ENCODE measurements at regions of chr19 and their contacts with region 1.

Region 1: DNA sequence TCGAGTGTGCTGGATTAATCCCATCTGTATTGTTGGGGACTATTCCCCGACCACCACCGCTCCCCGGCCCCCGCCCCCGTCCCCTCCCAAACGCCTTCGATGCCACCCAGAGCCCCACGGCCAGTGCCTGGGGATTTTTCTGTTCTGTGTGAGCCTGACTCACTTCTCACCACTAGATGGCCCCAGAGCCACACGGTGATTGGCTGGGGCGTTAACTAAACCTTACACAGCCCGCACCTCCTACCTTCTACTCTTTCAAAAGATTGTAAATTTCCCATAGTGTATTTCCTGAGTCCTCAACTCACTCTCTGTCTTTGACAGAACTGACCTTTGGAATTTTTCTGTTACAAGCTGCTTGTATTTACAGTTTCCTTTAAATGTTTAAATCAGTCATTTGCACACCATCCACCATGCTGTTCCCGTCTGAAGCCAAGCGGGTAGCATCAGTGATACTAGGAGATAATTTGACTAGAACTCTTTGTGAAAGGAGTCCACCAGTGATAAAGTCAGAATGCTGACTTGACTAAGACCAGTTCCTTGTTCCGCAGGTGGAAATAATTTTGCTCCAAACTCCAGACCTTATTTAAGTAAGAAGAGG is 61.4 kb downstream of the RFX2 start:
- H3K4me3 ChIP-seq: no peak overlapping the region
- H3K27ac ChIP-seq: no peak overlapping the region
- H3K4me1 ChIP-seq: no peaks in the 10 kb centered on the region
- CTCF ChIP-seq: peak; percentile 52; the same call in 1 of the 2 replicates

Region 2: GRCh38 chr19:5987077-5987818 is 61.7 kb before region 1 on chr19:
- CTCF ChIA-PET with region 1: interaction called, 12 read pairs
- POLR2A ChIA-PET with region 1: interaction called, 3 read pairs
- H3K4me3 ChIP-seq: peak overlapping the region; percentile 23
- H3K27ac ChIP-seq: no peak overlapping the region
- H3K4me1 ChIP-seq: no peaks in the 10 kb centered on the region
- CTCF ChIP-seq: peak; percentile 77

Region 3: GRCh38 chr19:6038634-6039405 is 10.1 kb before region 1 on chr19:
- CTCF ChIA-PET with region 1: interaction called, 14 read pairs
- POLR2A ChIA-PET with region 1: no interaction called
- H3K4me3 ChIP-seq: no peak overlapping the region
- H3K27ac ChIP-seq: no peak overlapping the region
- H3K4me1 ChIP-seq: no peaks in the 10 kb centered on the region
- CTCF ChIP-seq: no peak

Region 4: GRCh38 chr19:6110360-6110977 is 61.6 kb after region 1 on chr19 and contains the start of gene RFX2:
- CTCF ChIA-PET with region 1: interaction called, 13 read pairs
- POLR2A ChIA-PET with region 1: no interaction called
- H3K4me3 ChIP-seq: peak within 1 kb of the TSS; percentile 66
- H3K27ac ChIP-seq: no peak within 1 kb of the TSS
- H3K4me1 ChIP-seq: peaks cover 11% of the 10 kb centered on the region
- CTCF ChIP-seq: no peak

Region 5: GRCh38 chr19:6116749-6117430 is 68.0 kb after region 1 on chr19:
- CTCF ChIA-PET with region 1: interaction called, 13 read pairs
- POLR2A ChIA-PET with region 1: no interaction called
- H3K4me3 ChIP-seq: no peak overlapping the region
- H3K27ac ChIP-seq: no peak overlapping the region
- H3K4me1 ChIP-seq: no peaks in the 10 kb centered on the region
- CTCF ChIP-seq: no peak

Region 6: GRCh38 chr19:6125571-6125989 is 76.7 kb after region 1 on chr19:
- CTCF ChIA-PET with region 1: interaction called, 95 read pairs
- POLR2A ChIA-PET with region 1: interaction called, 3 read pairs
- H3K4me3 ChIP-seq: no peak overlapping the region
- H3K27ac ChIP-seq: no peak overlapping the region
- H3K4me1 ChIP-seq: no peaks in the 10 kb centered on the region
- CTCF ChIP-seq: peak; percentile 58

Region 7: DNA sequence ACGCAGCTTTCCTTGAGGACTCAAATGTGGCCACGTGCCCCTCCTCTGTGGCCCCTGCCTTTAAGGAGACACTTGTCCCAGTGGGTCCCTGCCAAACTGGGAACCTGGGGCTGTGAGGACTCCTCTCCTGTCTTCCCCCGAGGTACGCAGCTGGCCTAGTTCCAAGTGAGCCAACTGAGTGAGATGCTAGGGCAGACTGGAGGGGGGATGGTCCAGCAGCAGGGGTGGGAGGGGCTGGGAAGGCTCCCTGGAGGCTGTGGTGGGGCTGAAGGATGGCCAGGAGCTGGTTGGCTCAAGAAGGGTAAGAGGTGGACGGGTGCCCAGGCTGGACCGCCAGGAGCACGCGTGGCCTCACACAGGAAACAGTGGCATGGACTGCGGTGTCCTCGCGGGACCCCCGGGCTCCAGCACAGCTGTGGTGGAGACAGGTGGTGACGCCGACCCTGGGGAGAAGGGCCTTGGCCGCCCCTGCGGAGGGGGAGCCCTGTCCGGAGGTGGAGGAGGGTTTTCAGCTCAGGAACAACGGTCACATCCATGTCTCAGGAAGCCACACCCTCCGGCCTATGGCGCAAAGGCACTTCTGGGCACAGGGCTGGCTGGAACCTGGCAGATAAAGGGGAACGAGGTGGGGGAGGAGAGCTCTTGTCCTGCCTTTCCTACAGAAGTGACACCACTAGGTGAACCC is 185.1 kb after region 1 on chr19:
- CTCF ChIA-PET with region 1: no interaction called
- POLR2A ChIA-PET with region 1: no interaction called
- H3K4me3 ChIP-seq: no peak overlapping the region
- H3K27ac ChIP-seq: no peak overlapping the region
- H3K4me1 ChIP-seq: no peaks in the 10 kb centered on the region; the same call in 1 of the 2 replicates
- CTCF ChIP-seq: no peak

Measured in HEK293 (cell line).